ENCODE measurements at regions of chr14 and their contacts with region 1.

Region 1: DNA sequence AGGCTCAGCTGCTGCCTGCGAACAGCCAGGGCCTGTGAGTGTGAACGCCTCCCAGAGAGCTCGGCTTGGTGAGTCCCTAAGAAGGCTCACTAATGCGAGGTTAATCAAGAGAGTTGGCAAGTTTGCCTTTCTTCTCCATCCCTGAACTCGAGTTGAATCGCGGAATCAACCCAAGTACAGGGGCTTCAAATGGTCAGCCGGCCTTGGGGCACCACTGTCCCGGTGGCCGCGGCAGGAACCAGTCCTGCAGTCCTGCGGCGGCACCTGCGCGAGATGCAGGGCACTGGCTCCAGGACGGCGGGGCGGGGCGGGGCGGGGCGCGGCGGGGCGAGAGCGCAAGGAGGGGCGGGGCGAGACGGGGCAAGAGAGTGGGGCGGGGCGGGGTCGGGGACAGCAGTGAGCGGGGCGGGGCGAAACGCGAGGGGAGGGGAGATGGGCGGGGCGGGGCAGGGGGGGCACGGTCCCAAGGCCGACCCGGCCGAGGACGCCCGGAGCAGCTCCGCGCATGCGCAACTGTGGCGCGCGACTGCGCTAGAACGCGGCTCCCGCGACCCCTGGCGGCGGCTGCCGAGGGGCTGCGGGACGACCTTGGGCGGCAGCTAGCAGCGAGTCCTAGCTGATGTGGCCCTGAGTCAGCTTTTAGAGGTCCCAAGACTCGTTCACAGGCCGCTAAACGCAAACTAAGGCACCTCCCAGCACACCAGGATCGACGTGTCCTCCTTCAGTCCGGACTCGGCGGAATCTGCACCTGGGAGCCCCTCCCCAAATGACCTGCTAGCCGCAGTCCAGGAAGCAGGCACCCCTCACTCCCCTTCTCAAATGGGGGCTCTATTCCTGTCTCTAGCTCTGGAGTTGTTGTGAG is 58.0 kb downstream of the TTC7B start:
- DNase-seq: peak; percentile 71 to 98 (median 80)

Region 2: DNA sequence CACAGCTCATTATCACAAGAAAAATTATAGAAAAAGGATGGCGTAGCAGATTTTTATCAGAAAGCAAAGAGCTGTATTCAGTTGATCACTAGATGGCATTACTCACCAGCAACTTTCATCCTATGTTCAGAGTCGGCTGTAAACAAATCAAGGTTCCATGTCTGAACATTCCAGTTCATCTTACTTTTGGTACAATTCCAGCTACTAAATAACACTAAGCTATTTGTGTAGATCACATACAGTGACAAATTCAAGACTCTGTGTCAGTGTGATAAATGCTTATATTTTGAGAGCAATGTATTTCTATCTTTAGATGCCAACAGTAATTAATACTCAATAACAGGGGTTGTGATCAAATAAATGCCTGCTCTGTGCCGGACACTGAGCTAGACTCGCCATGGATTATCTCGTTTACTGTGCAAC is 456.6 kb before region 1 on chr14:
- intact Hi-C with region 1: loop called (anchors 1 kb)
- DNase-seq: no peak

Region 3: DNA sequence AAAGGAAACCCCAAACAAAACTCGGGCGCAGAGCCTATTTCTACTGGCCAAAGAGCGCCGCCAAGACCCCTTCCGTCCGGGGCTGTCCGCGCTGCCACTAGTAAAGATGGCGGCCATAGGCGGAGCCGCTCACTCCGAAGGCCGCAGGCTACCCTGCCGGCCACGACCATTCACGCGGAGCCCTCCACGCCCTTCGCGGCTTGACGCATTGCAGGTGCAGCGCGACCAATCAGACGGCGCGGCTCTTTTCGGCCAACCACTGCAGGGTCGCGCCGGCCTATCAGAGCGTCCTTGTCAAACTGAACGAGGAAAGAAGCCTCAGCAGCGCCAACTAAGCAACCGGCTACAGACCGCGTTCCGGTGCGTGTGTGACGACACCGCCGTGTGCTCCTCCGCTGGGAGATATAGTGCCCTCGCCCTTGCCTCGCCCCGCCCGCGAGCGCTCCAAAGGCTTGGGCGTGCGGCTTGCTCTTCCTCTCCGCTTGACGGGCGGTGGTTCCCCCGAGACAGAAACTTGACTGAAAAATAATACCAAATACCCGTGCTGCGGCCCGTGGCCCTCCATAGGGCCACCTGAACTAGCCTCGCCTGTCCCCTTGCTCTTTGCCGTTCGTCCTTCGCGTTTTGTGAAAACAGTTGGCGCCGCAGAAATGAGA is 375.1 kb before region 1 on chr14:
- intact Hi-C with region 1: loop called (anchors 5 kb)
- DNase-seq: peak; percentile 98 to 100 (median 99)

Region 4: DNA sequence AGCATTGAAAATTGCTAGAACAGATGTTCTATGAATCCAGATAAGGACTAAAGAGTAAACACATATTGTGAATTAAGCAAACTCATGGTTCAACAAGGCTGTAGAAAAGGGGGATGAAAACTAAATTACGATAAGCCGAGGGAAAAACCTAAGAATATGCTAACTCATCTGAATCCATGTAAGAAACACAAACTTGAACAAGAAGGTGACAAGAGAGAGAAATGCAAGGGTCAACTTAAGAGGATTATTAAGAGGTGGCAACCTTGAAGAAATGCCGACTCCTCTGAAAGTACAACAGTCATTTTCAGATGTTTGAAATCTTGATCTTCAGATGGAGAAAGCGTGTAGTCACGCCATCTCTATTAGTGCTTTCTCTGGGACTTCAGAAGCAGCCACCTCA is 70.6 kb before region 1 on chr14:
- intact Hi-C with region 1: no loop called
- DNase-seq: no peak

Region 5: DNA sequence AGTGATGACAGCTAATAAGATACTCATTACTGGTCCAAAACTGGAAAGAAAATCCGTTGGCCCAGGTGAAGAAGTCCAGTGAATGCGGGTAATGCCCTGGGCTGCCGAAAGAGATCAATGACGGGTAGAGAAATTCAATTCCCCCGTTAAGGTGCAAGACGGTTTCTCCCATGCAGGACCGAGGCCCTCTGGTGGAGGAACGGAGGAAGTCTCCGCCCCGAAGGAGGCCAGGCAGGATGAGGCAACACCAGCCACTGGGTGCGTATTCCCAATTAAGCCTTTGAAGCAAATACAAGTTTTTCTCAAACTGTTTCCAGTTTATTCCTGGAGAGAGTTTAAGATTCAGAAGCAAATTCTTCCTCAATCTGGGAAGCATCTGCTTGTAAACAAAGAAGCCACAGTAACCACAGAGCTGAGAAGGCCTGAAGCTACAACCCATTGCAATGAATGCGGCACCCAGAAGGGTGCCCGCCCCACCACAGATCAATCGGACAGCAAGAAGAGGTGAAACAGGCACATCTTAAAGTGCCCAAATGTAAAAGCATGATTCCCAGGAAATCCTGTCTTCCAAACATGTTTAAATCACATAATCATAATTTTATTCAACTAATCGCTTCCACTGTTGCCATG is 60.6 kb before region 1 on chr14:
- intact Hi-C with region 1: loop called (anchors 2 kb)
- DNase-seq: peak; percentile 82 to 98 (median 91)

Region 6: GRCh38 chr14:90815822-90816700 is 57.8 kb after region 1 on chr14 and contains the start of gene TTC7B:
- intact Hi-C with region 1: loop called (anchors 5 kb)
- DNase-seq: peak in 4 of 10 donors; percentile 24 to 67 (median 47)

Region 7: DNA sequence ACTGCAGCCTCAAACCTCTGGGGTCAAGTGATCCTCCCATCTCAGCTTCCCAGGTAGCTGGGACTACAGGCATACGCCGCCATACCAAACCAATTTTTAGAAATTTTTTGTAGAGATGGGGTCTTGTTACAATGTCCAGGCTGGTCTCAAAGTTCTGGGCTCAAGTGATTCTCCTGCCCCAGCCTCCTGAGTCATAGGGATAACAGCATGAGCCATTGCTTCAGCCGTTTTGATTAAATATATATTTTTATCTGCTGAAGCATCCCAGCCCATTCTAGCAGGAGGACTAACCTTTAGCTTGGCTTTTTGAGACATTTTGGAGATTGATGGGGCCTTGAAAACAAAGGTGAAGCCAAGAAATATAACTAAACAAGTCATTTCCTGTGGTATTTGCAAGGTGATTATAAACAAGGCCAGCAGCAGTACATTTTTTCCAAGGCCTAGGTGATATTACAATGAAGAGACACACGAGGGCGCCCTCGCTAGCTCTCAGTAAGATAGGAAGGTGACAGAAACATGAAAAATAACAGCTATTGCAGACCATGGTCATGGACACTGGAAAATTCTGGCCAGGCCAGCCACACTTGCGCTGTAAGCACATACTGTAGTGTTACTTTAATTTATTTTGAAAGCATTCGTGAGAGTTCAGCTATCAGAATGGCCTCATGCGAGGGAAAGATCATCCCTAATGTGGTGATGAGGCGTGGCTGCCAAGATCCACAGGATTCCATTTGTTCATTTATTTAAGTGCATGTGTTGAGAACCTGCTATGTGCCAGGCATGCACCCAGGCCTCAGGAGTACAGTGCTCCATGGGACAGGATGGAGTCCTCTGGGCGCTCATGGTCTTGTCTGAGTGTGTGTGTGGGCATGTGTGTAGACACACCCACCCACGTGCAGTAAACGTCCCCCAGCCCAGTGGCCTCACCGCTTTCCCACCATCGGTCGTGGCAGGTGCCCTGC is 419.1 kb after region 1 on chr14:
- intact Hi-C with region 1: loop called (anchors 10 kb)
- DNase-seq: peak in 7 of 10 donors; percentile 24 to 83 (median 41)